Activated CD8-positive, alpha-beta memory T cell treated with anti-CD3 and anti-CD28 coated beads, Interleukin-2, amount 10 ng/mL, durations not matched to agents 7 days and 5 days (primary cell): ENCODE measurements at regions of chr12 and their contacts with region 1.

Region 1: DNA sequence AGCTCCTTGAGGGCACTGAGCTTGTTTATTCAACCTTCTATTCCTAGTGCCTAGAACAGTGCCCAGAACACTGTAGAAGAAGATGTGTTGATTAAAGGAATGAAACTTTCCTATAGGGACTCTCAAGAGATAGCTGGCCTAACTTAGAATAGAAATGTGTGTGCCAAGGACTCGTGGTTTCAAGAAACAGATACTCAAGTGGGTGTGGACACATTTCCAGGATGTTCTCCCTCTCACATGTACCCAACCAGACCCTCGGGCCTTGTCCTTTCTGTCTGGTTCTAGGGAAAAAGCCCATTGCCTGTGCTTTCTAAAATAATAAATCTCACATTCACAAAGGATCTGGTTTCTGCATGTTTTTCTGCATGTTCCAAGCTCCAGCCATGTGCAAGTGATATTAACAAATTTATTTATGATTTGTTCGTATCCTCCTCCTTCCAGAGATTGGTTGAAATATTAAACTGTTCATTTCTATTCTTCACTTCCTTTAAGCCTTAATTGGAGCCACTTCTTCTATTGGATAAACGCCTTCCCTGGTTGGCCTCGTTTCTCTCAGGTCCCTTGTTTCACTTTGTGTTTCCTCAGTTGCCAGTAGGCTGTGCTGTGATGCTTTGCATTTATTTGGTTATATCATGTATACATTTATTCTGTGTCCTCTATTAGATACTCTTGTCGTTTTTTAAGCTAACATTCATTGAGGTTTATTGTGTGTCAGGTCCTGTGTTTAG is 89.8 kb downstream of the CRADD start:
- DNase-seq: peak; percentile 55
- ATAC-seq: peak; percentile 81
- H3K4me3 Mint-ChIP-seq: no peak overlapping the region
- H3K27ac Mint-ChIP-seq: peak overlapping the region; percentile 50
- H3K4me1 Mint-ChIP-seq: peaks cover 28% of the 10 kb centered on the region
- H3K27me3 Mint-ChIP-seq: no peaks in the 10 kb centered on the region

Region 2: DNA sequence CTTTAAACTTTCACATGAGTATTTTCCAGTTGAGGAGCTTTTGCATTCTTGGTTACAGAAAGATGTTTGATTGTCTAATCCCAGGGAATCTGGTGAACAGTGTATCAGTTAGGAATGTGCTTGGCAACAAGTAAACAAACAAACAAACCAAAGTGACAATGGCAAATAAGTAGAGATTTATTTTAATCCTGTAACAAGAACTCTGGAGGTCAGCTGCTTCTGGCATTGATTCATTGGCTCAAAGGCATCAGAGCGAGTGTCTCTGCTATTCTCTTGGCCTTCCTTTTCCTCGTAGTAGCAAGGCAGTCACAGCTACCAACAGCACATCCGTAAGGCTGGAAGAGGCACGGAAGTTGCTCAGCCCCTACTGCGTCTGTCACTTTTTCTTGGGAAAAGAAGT is 52.6 kb before region 1 on chr12:
- CTCF ChIA-PET with region 1: no interaction called
- DNase-seq: no peak
- ATAC-seq: no peak
- H3K4me3 Mint-ChIP-seq: no peak overlapping the region
- H3K27ac Mint-ChIP-seq: no peak overlapping the region
- H3K4me1 Mint-ChIP-seq: no peaks in the 10 kb centered on the region
- H3K27me3 Mint-ChIP-seq: no peaks in the 10 kb centered on the region

Region 3: DNA sequence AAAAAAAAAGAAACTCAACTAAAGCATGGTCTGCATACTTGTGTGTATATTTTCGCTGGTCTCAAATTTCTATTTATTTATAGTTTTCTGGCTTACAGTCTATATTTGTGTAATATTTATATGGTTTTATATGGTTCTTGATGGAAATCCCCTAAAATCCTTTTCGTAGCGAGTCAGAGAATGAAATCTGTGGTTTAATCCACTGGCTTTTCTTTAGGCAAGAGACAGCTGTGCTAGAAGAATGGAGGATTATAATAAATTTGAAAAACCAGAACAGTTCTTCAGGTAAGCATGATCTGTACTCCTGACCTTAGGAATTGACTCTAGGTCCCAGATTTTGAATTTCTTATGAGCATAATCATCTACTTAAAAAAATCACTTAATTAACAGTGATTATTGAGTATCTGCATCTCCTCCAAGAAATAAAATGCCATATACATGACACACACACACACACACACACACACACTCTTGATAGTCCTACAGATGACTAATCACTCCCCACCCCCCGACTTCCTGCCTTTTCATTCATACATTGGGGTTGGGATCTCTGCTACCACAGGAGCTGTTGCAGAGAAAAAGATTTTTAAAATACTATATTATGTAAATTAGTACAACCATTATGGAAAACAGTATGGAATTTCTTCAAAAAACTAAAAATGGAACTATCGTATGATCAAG is 23.7 kb after region 1 on chr12:
- CTCF ChIA-PET with region 1: no interaction called
- DNase-seq: no peak
- ATAC-seq: no peak
- H3K4me3 Mint-ChIP-seq: no peak overlapping the region
- H3K27ac Mint-ChIP-seq: no peak overlapping the region
- H3K4me1 Mint-ChIP-seq: peaks cover 15% of the 10 kb centered on the region
- H3K27me3 Mint-ChIP-seq: no peaks in the 10 kb centered on the region

Region 4: GRCh38 chr12:93979189-93979588 is 212.2 kb after region 1 on chr12:
- CTCF ChIA-PET with region 1: interaction called, 36 read pairs
- DNase-seq: no peak
- ATAC-seq: peak; percentile 36
- H3K4me3 Mint-ChIP-seq: no peak overlapping the region
- H3K27ac Mint-ChIP-seq: no peak overlapping the region
- H3K4me1 Mint-ChIP-seq: peaks cover 22% of the 10 kb centered on the region
- H3K27me3 Mint-ChIP-seq: peaks cover 22% of the 10 kb centered on the region